SK-N-SH (cell line): ENCODE measurements at regions of chr2 and their contacts with region 1.

Region 1: GRCh38 chr2:234135720-234136221 is 85.3 kb downstream of the SPP2 start:
- DNase-seq: peak; percentile 83
- H3K4me3 ChIP-seq: no peak overlapping the region; a peak in 1 of 4 replicates
- H3K27ac ChIP-seq: no peak overlapping the region
- H3K4me1 ChIP-seq: peaks cover 4 to 6% of the 10 kb centered on the region in 2 experiments; a peak in 1 of 4 replicates
- H3K27me3 ChIP-seq: no peaks in the 10 kb centered on the region
- CTCF ChIP-seq: peak; percentile 90
- EP300 ChIP-seq: no peak
- RAD21 ChIP-seq: peak; percentile 97

Region 2: GRCh38 chr2:233892793-233893192 is 243.0 kb before region 1 on chr2:
- CTCF ChIA-PET with region 1: no interaction called
- POLR2A ChIA-PET with region 1: no interaction called
- DNase-seq: peak; percentile 12
- H3K4me3 ChIP-seq: no peak overlapping the region
- H3K27ac ChIP-seq: no peak overlapping the region
- H3K4me1 ChIP-seq: peaks cover 0 to 6% of the 10 kb centered on the region in 2 experiments; a peak in 1 of 4 replicates
- H3K27me3 ChIP-seq: no peaks in the 10 kb centered on the region; the same call in 1 of the 2 replicates
- CTCF ChIP-seq: no peak
- EP300 ChIP-seq: no peak
- RAD21 ChIP-seq: no peak

Region 3: DNA sequence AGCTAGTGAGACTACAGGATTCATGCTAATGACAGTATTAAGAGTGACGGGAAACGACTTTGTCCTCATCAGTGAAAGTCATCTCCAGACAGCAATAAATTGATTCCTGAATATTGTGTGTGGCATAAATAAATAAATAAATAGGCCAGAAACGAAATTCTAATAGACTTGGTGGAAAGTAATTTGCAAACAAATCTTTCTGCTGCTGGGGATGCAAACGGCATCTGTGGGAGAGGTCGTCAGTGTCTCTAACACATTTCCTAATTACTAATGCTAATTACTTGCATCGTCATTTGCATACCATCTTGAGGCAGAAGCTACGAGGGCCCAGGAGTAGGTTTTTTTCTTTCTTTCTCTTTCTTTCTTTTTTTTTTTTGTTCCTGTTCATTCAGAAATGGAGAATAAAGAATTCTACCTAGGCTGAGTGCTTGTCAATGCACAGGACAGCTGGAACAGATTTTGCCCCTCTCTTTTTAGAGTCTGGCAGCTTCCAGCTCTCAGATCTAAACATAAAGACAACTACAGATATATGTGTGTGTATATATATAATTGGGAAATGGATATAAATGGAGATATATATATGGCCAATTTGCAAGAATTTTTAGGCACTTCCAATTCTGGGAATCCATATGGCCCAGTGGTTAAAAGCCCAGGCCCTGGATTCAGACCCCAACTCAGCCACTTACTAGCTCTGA is 10.2 kb before region 1 on chr2:
- CTCF ChIA-PET with region 1: interaction called, 15 read pairs
- POLR2A ChIA-PET with region 1: interaction called, 4 read pairs
- DNase-seq: no peak
- H3K4me3 ChIP-seq: no peak overlapping the region
- H3K27ac ChIP-seq: no peak overlapping the region
- H3K4me1 ChIP-seq: peaks cover 0 to 2% of the 10 kb centered on the region in 2 experiments; a peak in 1 of 4 replicates
- H3K27me3 ChIP-seq: no peaks in the 10 kb centered on the region
- CTCF ChIP-seq: no peak
- EP300 ChIP-seq: no peak
- RAD21 ChIP-seq: no peak

Region 4: DNA sequence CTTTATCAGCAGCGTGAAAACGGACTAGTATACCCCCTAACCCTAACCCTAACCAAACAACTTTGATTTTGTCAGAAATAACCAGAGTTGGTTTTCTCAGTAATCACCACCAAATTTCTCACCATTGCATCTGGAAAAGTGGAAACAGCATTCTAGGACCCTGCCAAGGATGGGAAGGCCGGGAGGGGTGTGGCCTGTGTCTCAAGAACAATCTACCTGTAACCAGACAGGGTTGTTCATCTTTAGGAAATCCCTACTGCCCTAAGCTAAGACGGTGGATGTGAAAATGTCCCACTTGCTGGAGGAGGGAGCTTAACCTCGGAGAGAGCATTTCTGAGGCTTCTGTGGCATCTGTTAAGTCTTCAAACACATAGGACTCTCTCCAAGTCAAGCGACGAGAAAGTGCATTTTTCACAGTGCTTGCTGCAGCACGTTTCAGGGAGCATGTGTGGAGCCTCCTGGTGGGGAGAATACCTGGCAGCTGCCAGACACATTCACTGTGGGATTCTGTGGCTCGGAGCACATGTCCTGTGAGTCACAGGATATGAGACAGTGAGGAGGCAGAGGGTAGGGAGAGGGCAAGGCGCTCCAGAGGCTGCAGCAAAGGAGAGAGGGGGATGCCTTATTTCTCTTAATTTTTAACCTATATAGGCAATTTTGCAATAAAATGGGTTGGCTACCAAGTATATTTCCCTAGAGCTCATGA is 122.2 kb after region 1 on chr2:
- CTCF ChIA-PET with region 1: interaction called, 11 read pairs
- POLR2A ChIA-PET with region 1: no interaction called
- DNase-seq: peak; percentile 61
- H3K4me3 ChIP-seq: no peak overlapping the region
- H3K27ac ChIP-seq: peak overlapping the region; percentile 48 to 91; a peak in 3 of 4 replicates
- H3K4me1 ChIP-seq: peaks cover 0 to 10% of the 10 kb centered on the region in 2 experiments; a peak in 2 of 4 replicates
- H3K27me3 ChIP-seq: no peaks in the 10 kb centered on the region
- CTCF ChIP-seq: peak; percentile 83
- EP300 ChIP-seq: peak; percentile 51 to 94; a peak in 3 of 4 replicates
- RAD21 ChIP-seq: peak; percentile 71

Region 5: GRCh38 chr2:234368861-234369261 is 233.1 kb after region 1 on chr2:
- CTCF ChIA-PET with region 1: no interaction called
- POLR2A ChIA-PET with region 1: no interaction called
- DNase-seq: no peak
- H3K4me3 ChIP-seq: no peak overlapping the region
- H3K27ac ChIP-seq: no peak overlapping the region
- H3K4me1 ChIP-seq: peaks cover 0 to 2% of the 10 kb centered on the region in 2 experiments; a peak in 1 of 4 replicates
- H3K27me3 ChIP-seq: no peaks in the 10 kb centered on the region
- CTCF ChIP-seq: no peak
- EP300 ChIP-seq: no peak
- RAD21 ChIP-seq: no peak

Region 6: GRCh38 chr2:234500394-234501006 is 364.7 kb after region 1 on chr2:
- CTCF ChIA-PET with region 1: interaction called, 55 read pairs
- POLR2A ChIA-PET with region 1: no interaction called
- DNase-seq: peak; percentile 61
- H3K4me3 ChIP-seq: no peak overlapping the region
- H3K27ac ChIP-seq: no peak overlapping the region
- H3K4me1 ChIP-seq: peaks cover 6 to 8% of the 10 kb centered on the region in 2 experiments; a peak in 2 of 4 replicates
- H3K27me3 ChIP-seq: no peaks in the 10 kb centered on the region
- CTCF ChIP-seq: peak; percentile 64
- EP300 ChIP-seq: no peak
- RAD21 ChIP-seq: peak; percentile 93

Region 7: DNA sequence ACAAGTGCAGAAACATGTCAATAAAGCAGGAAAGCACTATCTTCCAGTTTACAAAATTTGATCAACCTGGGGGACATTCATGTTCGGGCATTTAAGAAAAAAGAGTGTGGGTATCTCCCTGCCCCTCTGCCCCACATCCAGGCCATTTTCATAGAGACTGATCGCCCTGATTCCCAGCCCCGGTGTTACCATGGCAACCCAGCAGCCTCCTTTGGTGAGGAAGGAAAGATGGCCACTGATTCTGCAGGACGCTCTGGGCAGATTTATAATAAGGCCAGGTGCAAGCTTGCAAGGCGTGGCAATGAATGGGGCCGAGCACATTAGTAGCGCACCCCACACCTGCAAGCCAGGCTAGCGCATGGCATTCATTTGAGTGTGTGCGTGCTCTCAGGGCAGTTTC is 397.9 kb after region 1 on chr2:
- CTCF ChIA-PET with region 1: interaction called, 41 read pairs
- POLR2A ChIA-PET with region 1: no interaction called
- DNase-seq: peak; percentile 63
- H3K4me3 ChIP-seq: no peak overlapping the region
- H3K27ac ChIP-seq: no peak overlapping the region; a peak in 1 of 4 replicates
- H3K4me1 ChIP-seq: peaks cover 0 to 36% of the 10 kb centered on the region in 2 experiments; a peak in 1 of 4 replicates
- H3K27me3 ChIP-seq: no peaks in the 10 kb centered on the region
- CTCF ChIP-seq: no peak
- EP300 ChIP-seq: no peak
- RAD21 ChIP-seq: no peak